IMR-90 (cell line): ENCODE measurements at regions of chr16 and their contacts with region 1.

Region 1: DNA sequence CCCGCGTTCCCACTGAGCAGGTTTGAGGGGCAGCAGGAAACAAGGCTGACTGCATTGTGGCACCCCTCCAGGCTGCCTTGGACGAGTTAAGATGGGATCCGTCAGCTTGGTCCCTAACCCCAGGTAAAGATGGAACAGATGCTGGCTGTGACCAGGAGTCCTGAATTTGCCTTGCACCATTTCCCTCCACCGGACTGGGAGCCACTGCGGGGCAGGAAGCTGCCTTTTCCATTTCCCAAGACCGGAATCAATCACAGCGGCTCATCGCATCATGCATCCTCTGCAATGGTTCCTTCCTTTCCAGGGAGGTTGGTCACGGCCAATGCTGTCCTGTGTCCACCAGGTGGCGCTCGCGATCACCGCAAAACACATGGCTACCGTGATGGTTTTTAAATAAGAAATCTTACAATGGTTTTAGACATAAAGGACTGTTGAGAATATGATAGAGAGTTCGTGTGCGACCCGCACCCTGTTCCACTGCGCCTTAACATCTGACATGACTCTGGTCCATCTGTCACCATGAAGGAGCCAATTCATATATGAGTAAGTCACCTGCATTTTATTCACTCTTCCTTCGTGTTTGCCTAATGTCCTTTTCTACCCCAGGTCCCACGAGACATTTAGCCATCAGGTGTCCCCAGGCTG is 6.8 kb upstream of the MEAK7 start:
- DNase-seq: peak; percentile 86
- ATAC-seq: peak; percentile 95
- H3K4me3 ChIP-seq: no peak overlapping the region
- H3K27ac ChIP-seq: no peak overlapping the region
- H3K4me1 ChIP-seq: peaks cover 8% of the 10 kb centered on the region
- H3K27me3 ChIP-seq: no peaks in the 10 kb centered on the region
- CTCF ChIP-seq: peak; percentile 90
- POLR2A ChIP-seq: no peak
- RAD21 ChIP-seq: peak; percentile 92

Region 2: DNA sequence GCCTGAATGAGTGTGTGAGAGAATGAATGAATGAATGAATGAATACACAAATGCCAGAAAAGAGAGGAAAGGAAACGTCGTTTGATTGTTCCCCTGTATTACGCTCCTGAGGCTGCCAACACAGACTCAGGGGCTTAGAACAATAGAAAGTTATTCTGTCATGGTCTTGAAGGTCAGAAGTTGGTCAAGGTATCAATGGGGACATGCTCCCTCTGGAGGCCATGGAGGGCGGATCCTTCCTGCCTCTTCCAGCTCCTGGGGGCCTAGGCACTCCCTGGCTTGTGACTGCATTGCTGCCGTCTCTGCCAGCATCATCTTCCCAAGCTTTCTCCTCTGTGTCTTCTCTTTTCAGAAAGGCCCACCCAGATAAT is 467.2 kb before region 1 on chr16:
- CTCF ChIA-PET with region 1: no interaction called
- POLR2A ChIA-PET with region 1: no interaction called
- dilution Hi-C with region 1: no loop called
- in situ Hi-C with region 1: no loop called
- intact Hi-C with region 1: no loop called
- DNase-seq: peak; percentile 28
- ATAC-seq: peak; percentile 67
- H3K4me3 ChIP-seq: no peak overlapping the region
- H3K27ac ChIP-seq: no peak overlapping the region
- H3K4me1 ChIP-seq: no peaks in the 10 kb centered on the region
- H3K27me3 ChIP-seq: peaks cover 40% of the 10 kb centered on the region
- CTCF ChIP-seq: peak; percentile 40
- POLR2A ChIP-seq: no peak
- RAD21 ChIP-seq: peak; percentile 46

Region 3: DNA sequence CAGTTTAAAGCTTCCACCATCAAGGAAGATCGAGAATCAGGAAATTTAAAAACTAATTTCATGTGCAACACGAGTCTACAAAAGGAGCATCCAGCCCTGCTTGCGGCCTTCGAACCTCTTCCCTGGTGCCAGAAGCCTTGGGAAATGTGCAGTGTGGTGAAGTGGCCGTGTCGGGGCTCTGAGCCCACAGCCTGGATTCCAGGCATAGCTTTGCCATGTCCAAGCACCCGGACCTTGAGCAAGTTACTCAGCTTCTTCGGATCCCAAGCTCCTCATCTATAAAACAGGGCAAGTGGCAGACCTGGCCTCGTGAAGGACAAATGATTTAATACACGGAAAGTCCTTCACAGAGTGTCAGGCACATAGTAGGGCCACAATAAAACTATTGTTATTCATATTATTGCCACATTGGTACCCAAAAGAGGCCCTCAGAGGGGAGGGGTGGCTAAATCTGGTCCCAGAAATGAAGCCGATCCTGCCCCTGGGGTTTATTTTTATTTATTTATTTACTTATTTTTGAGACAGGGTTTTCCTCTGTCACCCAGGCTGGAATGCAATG is 71.7 kb after region 1 on chr16:
- CTCF ChIA-PET with region 1: no interaction called
- POLR2A ChIA-PET with region 1: no interaction called
- dilution Hi-C with region 1: no loop called
- in situ Hi-C with region 1: no loop called
- intact Hi-C with region 1: loop called (anchors 5 kb)
- DNase-seq: peak; percentile 81
- ATAC-seq: peak; percentile 95
- H3K4me3 ChIP-seq: no peak overlapping the region
- H3K27ac ChIP-seq: no peak overlapping the region
- H3K4me1 ChIP-seq: peaks cover 9% of the 10 kb centered on the region
- H3K27me3 ChIP-seq: no peaks in the 10 kb centered on the region
- CTCF ChIP-seq: no peak
- POLR2A ChIP-seq: no peak
- RAD21 ChIP-seq: peak; percentile 40

Region 4: GRCh38 chr16:84726079-84726668 is 214.9 kb after region 1 on chr16:
- CTCF ChIA-PET with region 1: interaction called, 3 read pairs
- POLR2A ChIA-PET with region 1: no interaction called
- dilution Hi-C with region 1: no loop called
- in situ Hi-C with region 1: loop called (anchors 5 kb)
- intact Hi-C with region 1: loop called (anchors 1 kb)
- DNase-seq: peak; percentile 85
- ATAC-seq: peak; percentile 66
- H3K4me3 ChIP-seq: no peak overlapping the region
- H3K27ac ChIP-seq: peak overlapping the region; percentile 24
- H3K4me1 ChIP-seq: peaks cover 15% of the 10 kb centered on the region
- H3K27me3 ChIP-seq: no peaks in the 10 kb centered on the region
- CTCF ChIP-seq: peak; percentile 95
- POLR2A ChIP-seq: no peak
- RAD21 ChIP-seq: peak; percentile 96